HAP-1 (cell line): ENCODE measurements at regions of chr2 and their contacts with region 1.

Region 1: GRCh38 chr2:70948337-70949003 is 12.8 kb downstream of the ATP6V1B1 start:
- DNase-seq: peak; percentile 53 to 94
- H3K4me3 ChIP-seq: peak overlapping the region; percentile 25
- H3K4me1 ChIP-seq: peaks cover 20% of the 10 kb centered on the region
- H3K27me3 ChIP-seq: peaks cover 4% of the 10 kb centered on the region

Region 2: DNA sequence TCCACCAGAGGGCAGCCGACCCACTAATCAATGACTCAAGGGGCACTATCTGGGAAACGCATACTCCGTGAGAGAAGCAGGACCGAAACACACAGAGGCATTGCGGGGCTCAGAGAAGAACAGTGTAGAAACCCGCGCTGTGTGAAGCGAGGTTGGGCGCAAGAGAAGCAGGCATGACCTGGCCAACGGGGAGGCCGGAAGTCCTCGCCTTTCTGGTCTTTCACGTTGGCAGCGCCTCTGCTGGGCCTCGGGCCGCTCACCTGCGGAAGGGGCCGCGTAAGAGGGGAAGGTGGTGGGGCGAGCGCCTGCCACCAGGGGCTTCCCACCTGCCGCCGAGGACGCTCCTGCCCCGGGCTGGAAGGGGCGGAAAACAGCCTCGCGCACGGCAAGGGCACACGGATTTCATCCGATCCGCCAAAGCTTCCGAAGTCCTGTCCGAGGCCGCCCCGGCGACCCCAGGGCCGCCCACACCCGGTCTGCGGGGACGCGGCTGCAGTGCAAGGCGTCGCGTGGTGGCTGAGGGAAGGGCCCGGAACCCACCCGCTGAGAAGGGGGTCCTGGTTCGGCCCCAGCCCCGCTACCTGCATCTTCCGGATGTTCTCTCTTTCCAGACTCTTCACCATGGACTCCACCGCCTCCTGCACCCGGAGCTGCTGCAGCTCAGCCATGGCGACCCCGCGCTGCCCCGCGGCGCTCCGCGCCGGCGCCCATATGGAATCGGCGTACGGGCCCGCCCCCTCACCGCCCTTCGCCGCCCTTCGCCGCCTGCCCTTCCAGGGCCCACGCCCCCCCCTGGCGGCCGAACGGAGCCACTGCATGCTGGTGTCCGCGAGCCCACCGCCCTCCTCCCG is 646.9 kb before region 1 on chr2 and contains the start of gene FAM136A:
- in situ Hi-C with region 1: loop called (anchors 25 kb)
- DNase-seq: peak; percentile 75 to 92
- H3K4me3 ChIP-seq: peak within 1 kb of the TSS; percentile 92
- H3K4me1 ChIP-seq: peaks cover 17% of the 10 kb centered on the region
- H3K27me3 ChIP-seq: no peaks in the 10 kb centered on the region

Region 3: DNA sequence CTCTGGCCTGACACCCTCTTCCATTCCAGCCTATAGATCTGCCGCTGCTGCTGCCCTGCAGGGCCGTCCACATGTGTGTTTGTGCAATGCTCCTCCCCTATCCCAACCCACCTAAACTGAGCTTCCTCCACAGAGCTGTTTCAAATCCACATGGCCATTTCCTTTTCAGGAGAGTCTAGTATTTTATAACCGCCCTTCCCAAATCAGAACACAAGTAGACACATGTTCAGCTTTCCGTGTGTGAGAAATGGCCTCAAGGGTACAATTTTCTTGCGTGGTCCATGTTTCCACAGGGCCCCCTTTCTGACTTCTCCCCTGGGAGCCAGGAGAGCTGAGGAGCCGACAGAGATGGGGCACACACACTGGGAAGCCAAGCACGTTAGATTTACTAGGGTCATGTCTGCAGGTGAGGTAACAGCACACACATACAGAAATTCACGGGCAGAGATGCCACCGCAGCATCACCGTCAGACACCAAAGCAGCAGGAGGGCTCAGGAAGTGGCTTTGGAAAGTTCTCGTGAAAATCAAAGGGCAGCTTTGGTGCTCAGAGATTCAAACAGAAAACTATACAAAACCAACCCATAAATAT is 292.0 kb before region 1 on chr2:
- in situ Hi-C with region 1: loop called (anchors 10 kb)
- DNase-seq: no peak
- H3K4me3 ChIP-seq: no peak overlapping the region
- H3K4me1 ChIP-seq: 0 out of 2 replicates have a peak, but pooled peaks cover 2% of the 10 kb centered on the region
- H3K27me3 ChIP-seq: no peaks in the 10 kb centered on the region

Region 4: DNA sequence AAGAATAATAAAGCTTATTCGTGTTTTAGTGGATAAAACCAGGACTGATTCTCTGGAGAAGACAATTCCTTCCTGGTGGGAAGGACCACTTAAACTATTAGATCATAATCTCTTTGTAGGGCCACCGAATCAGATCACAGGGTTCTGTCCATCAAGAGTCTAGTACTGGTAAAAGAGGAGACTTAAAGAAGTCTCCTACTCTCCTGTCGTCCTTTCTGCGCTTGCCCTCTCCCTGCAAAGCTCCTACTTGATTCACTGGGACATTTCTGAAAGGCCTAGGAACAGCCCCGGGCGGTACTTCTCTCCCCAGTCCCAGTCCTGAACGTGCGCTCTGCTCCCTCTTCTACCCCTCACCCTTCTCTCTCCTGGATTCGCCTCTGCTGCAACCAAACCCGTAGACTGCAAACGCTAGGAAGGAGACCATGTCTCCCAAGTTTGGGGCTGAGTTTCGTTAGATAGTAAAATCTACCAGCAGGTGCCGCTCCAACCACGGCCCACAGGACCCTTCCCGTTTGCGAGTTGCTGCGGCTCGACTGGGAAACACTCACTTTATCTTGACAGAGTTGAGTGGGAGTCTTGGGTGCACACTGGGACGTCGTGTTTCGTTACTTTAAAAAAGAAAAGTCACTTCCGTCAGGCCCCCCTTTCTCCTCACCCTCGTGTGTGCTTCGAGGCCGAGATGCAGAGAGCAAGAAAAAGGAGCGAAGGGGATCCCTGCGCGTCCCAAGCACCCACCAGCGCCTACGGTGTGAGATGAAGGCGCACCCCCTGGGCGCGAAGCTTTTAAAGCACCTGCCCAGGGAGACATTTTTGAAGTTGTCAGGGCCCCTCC is 158.9 kb before region 1 on chr2:
- in situ Hi-C with region 1: loop called (anchors 10 kb)
- DNase-seq: peak; percentile 64 to 86
- H3K4me3 ChIP-seq: 0 out of 2 replicates have a peak overlapping the region, but pooled peaks have one; percentile 6
- H3K4me1 ChIP-seq: peaks cover 4% of the 10 kb centered on the region
- H3K27me3 ChIP-seq: no peaks in the 10 kb centered on the region

Region 5: DNA sequence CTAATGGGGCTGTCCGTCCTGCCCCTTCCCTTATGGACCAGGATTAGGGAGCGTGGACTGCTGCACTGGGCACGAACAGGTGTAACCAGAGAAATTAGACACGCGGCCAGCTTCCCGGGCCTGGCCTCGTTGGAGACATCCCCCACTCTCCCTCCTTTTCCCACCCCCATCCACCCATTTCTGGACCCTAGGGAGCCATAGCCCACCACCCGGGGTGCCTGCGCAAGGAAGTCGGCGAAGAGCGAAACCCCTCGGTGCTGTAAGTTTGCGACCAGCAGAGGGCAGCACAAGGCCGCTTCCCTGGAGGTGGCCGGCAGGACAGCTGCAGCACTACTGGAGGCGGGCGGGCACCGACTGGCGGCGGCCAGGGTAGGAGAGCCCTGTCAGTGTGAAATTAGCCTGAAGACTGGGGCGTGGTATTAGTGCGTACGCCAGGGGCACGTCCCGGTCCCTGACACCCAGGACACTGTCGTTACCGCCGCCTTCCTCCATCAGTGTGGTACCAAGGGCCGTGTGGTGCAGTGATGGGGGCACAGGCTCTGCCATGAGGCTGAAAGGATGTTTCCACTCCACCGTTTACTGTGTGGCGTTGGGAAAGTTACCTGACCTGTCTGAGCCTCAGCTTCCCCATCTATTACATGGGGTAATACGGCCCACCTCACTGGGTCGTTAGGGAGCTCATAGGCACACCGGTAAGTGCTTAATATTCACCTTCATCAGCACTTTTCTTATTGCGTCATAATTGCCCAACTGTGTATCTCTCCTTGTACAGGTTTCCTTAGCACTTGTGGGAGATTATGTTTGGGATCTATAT is 76.9 kb before region 1 on chr2:
- in situ Hi-C with region 1: loop called (anchors 5 kb)
- DNase-seq: peak; percentile 76 to 94
- H3K4me3 ChIP-seq: peak overlapping the region; percentile 7; the same call in 1 of the 2 replicates
- H3K4me1 ChIP-seq: peaks cover 11% of the 10 kb centered on the region
- H3K27me3 ChIP-seq: no peaks in the 10 kb centered on the region